Activated B cell treated with CpG ODN at 0.5 μM for 24 hours (primary cell): ENCODE measurements at regions of chr20 and their contacts with region 1.

Region 1: DNA sequence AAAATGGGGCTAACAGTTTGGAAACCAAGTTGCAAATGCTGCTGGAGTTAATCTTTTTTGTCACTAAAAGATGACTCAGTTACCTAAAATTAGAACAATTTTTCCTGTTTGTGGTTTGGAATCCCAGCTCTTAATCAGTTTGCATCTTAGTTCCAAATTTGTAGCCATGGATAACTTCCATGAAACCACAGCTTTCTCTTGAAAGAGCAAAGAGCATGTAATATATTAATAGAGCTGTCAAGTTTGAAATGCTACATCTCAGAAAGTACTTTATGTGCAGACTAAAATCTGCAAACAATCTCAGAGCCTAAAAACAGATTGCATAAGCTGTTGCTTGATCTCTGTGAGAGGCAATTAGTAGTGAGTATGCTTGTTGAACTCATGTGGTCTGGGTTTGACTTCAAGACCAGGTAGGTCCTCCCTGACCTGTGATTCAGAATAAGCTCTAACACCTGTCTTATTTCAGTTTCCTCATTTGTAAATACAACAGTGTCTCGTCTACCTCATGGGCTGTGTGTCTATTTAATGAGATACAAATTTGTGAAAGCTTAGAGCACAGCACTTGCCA is 23.5 kb downstream of the DHX35 start:
- DNase-seq: no peak
- ATAC-seq: no peak
- H3K4me3 Mint-ChIP-seq: no peak overlapping the region
- H3K27ac Mint-ChIP-seq: no peak overlapping the region
- H3K4me1 Mint-ChIP-seq: peaks cover 17% of the 10 kb centered on the region
- H3K27me3 Mint-ChIP-seq: no peaks in the 10 kb centered on the region
- CTCF ChIP-seq: no peak

Region 2: GRCh38 chr20:38926142-38926933 is 59.3 kb before region 1 on chr20 and contains the start of gene FAM83D:
- CTCF ChIA-PET with region 1: no interaction called
- POLR2A ChIA-PET with region 1: no interaction called
- intact Hi-C with region 1: loop called (anchors 2 kb)
- DNase-seq: peak; percentile 86
- ATAC-seq: peak; percentile 95
- H3K4me3 Mint-ChIP-seq: peak within 1 kb of the TSS; percentile 77
- H3K27ac Mint-ChIP-seq: peak within 1 kb of the TSS; percentile 65
- H3K4me1 Mint-ChIP-seq: peaks cover 12% of the 10 kb centered on the region
- H3K27me3 Mint-ChIP-seq: peaks cover 3% of the 10 kb centered on the region
- CTCF ChIP-seq: no peak
- total RNA-seq, gene FAM83D: 0.93 and 1.2 TPM in 2 replicates